ENCODE measurements at regions of chr17 and their contacts with region 1.

Region 1: DNA sequence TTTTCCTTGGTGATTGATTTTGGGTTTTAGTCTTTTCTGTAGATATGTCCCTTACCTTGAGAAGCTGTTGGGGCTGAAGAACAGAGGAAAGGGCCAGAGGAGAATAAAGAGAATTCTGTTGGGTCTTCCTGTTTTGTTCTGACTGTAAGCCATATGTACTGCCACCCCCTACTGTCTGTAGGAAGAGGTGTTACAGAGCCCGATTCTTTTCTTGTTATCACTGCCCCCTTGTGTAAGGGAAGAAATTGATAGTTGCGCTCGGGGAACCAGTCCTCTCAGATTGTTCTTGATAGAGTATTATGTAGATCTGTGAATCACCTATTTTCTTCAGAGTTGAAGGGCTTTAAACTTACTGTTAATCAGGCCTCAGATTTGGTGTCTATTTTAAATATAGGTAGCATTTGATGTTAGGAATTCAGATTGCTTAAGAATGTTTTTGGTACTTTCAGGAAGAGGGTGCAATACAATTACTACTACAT is 2.4 kb downstream of the TANC2 start:
- DNase-seq: peak in 13 of 14 experiments; percentile 13 to 87 (median 35)
- ATAC-seq: peak; percentile 56
- H3K4me3 ChIP-seq: no peak overlapping the region
- H3K4me3 Mint-ChIP-seq: peak overlapping the region; percentile 87
- H3K27ac ChIP-seq: no peak overlapping the region
- H3K27ac Mint-ChIP-seq: peak overlapping the region; percentile 68
- H3K4me1 ChIP-seq: peaks cover 18% of the 10 kb centered on the region
- H3K4me1 Mint-ChIP-seq: peaks cover 37% of the 10 kb centered on the region
- H3K27me3 ChIP-seq: no peaks in the 10 kb centered on the region
- H3K27me3 Mint-ChIP-seq: no peaks in the 10 kb centered on the region
- CTCF ChIP-seq: peak; percentile 91

Region 2: DNA sequence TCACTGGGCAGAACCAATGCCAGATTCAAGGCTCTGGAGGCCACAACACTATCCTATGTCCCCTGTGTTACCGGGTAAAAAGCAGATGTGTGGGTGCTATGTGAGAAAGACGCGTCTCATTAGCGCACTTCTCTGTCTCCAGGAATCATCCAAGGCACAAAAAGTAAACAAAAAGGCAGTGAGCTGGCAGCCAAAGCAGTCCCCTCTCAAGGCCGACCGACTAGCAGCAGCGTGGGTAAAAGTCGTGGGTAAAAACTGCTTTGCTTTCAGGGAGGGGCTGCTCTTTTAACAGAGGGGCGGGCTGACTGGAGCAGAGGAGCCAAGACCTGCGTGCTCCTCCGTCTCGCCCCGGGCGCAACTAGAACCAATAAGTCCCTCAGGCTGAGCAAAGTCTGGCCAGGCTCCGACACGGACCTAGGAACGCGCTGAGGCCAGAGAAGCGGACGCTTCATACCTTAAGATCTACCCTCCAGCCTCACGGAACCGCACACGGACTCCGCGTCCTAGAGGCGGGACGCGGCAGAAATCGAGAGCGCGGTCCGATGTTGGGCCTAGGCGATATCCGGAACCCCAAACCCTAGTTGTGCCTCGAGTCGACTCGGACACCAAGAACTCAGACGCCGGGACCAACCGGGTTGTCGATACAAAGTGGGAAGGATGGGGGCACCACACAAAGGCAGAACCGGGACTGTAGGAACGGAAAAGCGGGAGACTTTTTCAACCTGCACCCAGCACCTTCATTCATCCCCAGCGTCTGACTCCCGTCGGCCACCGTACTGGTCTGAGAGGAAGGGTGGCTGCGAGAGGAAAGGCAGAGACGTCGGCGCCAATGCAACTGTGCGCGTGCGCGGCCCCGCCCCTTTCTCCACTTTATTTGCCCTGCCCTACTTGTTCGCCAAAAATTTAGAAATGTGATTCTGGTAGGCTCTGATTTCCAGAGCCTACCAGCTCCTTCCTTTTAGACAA is 1041.0 kb before region 1 on chr17 and contains the start of gene INTS2:
- CTCF ChIA-PET with region 1: no interaction called
- POLR2A ChIA-PET with region 1: no interaction called
- intact Hi-C with region 1: loop called in 1 of 2 experiments (anchors 10 kb)
- DNase-seq: peak; percentile 91 to 98 (median 95)
- ATAC-seq: peak; percentile 84
- H3K4me3 ChIP-seq: peak within 1 kb of the TSS; percentile 62
- H3K4me3 Mint-ChIP-seq: peak within 1 kb of the TSS; percentile 94
- H3K27ac ChIP-seq: peak within 1 kb of the TSS; percentile 68 to 78
- H3K27ac Mint-ChIP-seq: peak within 1 kb of the TSS; percentile 93
- H3K4me1 ChIP-seq: peaks cover 18% of the 10 kb centered on the region
- H3K4me1 Mint-ChIP-seq: peaks cover 27% of the 10 kb centered on the region
- H3K27me3 ChIP-seq: no peaks in the 10 kb centered on the region
- H3K27me3 Mint-ChIP-seq: peaks cover 6% of the 10 kb centered on the region
- CTCF ChIP-seq: no peak
- total RNA-seq, gene INTS2: 8.5 to 8.7 TPM

Region 3: GRCh38 chr17:62478433-62478879 is 490.0 kb before region 1 on chr17 and contains the start of gene TLK2:
- CTCF ChIA-PET with region 1: no interaction called
- POLR2A ChIA-PET with region 1: no interaction called
- intact Hi-C with region 1: loop called in 1 of 2 experiments (anchors 5 kb)
- DNase-seq: peak; percentile 53 to 88 (median 78)
- ATAC-seq: peak; percentile 62
- H3K4me3 ChIP-seq: peak within 1 kb of the TSS; percentile 62
- H3K4me3 Mint-ChIP-seq: peak within 1 kb of the TSS; percentile 94
- H3K27ac ChIP-seq: peak within 1 kb of the TSS; percentile 56 to 60
- H3K27ac Mint-ChIP-seq: peak within 1 kb of the TSS; percentile 97
- H3K4me1 ChIP-seq: peaks cover 13% of the 10 kb centered on the region
- H3K4me1 Mint-ChIP-seq: peaks cover 42% of the 10 kb centered on the region
- H3K27me3 ChIP-seq: no peaks in the 10 kb centered on the region
- H3K27me3 Mint-ChIP-seq: no peaks in the 10 kb centered on the region
- CTCF ChIP-seq: no peak
- total RNA-seq, gene TLK2: 85.3 to 86.5 TPM

Region 4: DNA sequence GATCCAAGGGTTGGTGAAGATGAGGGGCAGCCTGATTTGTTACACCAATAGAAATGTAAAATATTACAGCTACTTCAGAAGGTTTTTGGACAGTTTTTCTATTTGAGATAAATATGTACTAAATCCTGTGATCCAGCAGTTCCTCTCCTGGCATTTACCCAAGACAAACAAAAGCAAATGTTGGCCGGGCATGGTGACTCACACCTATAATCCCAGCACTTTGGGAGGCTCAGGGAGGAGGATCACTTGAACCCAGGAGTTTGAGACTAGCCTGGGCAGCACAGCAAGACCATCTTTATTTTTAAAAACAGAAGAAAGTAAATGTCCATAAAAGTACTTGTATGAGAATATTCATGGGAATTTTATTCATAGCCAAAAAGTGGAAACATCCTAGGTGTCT is 405.8 kb before region 1 on chr17:
- CTCF ChIA-PET with region 1: no interaction called
- POLR2A ChIA-PET with region 1: no interaction called
- intact Hi-C with region 1: loop called in 1 of 2 experiments (anchors 5 kb)
- DNase-seq: no peak
- ATAC-seq: no peak
- H3K4me3 ChIP-seq: no peak overlapping the region
- H3K4me3 Mint-ChIP-seq: no peak overlapping the region
- H3K27ac ChIP-seq: no peak overlapping the region
- H3K27ac Mint-ChIP-seq: no peak overlapping the region
- H3K4me1 ChIP-seq: no peaks in the 10 kb centered on the region
- H3K4me1 Mint-ChIP-seq: peaks cover 17% of the 10 kb centered on the region
- H3K27me3 ChIP-seq: no peaks in the 10 kb centered on the region
- H3K27me3 Mint-ChIP-seq: no peaks in the 10 kb centered on the region
- CTCF ChIP-seq: no peak

Region 5: DNA sequence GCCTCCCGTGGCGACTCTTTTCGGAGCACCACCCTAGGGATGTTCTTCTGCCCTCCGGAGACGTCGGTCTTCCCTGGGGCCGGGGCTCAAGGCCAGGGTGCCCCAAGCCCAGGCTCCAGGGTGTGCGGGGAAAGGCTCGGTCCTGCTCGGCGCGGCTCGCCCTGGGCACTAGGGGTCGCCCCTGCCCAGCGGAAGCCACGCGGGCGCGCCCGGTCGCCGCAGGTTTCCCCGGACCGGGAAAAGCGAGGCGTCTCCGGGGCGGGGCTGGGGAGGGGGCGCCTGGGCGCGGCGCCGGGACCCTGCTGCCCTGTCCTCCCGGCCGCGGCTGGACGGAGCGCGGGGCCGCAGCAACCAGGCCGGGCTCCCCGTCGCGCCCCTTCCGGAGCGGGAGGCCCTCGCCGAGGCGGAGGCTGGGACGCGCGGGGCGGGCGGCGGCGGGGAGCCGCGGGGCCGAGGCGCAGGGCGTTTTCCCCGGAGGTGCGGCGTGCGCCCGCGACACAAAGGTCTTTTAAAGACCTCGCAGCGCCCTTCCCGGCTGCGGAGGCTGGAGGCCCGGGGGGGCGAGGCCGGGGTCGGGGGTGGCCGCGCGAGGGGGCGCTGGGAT is 264.6 kb before region 1 on chr17:
- CTCF ChIA-PET with region 1: no interaction called
- POLR2A ChIA-PET with region 1: no interaction called
- intact Hi-C with region 1: loop called (anchors 1 kb)
- DNase-seq: peak; percentile 30 to 85 (median 67)
- ATAC-seq: peak; percentile 94
- H3K4me3 ChIP-seq: peak overlapping the region; percentile 56
- H3K4me3 Mint-ChIP-seq: peak overlapping the region; percentile 34
- H3K27ac ChIP-seq: no peak overlapping the region
- H3K27ac Mint-ChIP-seq: no peak overlapping the region
- H3K4me1 ChIP-seq: peaks cover 16% of the 10 kb centered on the region
- H3K4me1 Mint-ChIP-seq: peaks cover 4% of the 10 kb centered on the region
- H3K27me3 ChIP-seq: no peaks in the 10 kb centered on the region
- H3K27me3 Mint-ChIP-seq: peaks cover 16% of the 10 kb centered on the region
- CTCF ChIP-seq: peak; percentile 78

Region 6: GRCh38 chr17:62724398-62725146 is 243.9 kb before region 1 on chr17:
- CTCF ChIA-PET with region 1: no interaction called
- POLR2A ChIA-PET with region 1: interaction called, 17 read pairs
- intact Hi-C with region 1: loop called (anchors 1 to 5 kb)
- DNase-seq: peak; percentile 43 to 89 (median 54)
- ATAC-seq: peak; percentile 96
- H3K4me3 ChIP-seq: peak overlapping the region; percentile 42
- H3K4me3 Mint-ChIP-seq: peak overlapping the region; percentile 80
- H3K27ac ChIP-seq: peak overlapping the region; percentile 8 to 87
- H3K27ac Mint-ChIP-seq: peak overlapping the region; percentile 91
- H3K4me1 ChIP-seq: peaks cover 26% of the 10 kb centered on the region
- H3K4me1 Mint-ChIP-seq: peaks cover 28% of the 10 kb centered on the region
- H3K27me3 ChIP-seq: no peaks in the 10 kb centered on the region
- H3K27me3 Mint-ChIP-seq: no peaks in the 10 kb centered on the region
- CTCF ChIP-seq: no peak

Region 7: GRCh38 chr17:62923258-62924150 is 45.0 kb before region 1 on chr17:
- CTCF ChIA-PET with region 1: no interaction called
- POLR2A ChIA-PET with region 1: no interaction called
- intact Hi-C with region 1: no loop called
- DNase-seq: no peak
- ATAC-seq: no peak
- H3K4me3 ChIP-seq: no peak overlapping the region
- H3K4me3 Mint-ChIP-seq: no peak overlapping the region
- H3K27ac ChIP-seq: no peak overlapping the region
- H3K27ac Mint-ChIP-seq: no peak overlapping the region
- H3K4me1 ChIP-seq: no peaks in the 10 kb centered on the region
- H3K4me1 Mint-ChIP-seq: no peaks in the 10 kb centered on the region
- H3K27me3 ChIP-seq: peaks cover 3 to 9% of the 10 kb centered on the region in 2 experiments
- H3K27me3 Mint-ChIP-seq: peaks cover 11% of the 10 kb centered on the region
- CTCF ChIP-seq: no peak

Region 8: GRCh38 chr17:62987137-62987536 is 18.7 kb after region 1 on chr17:
- CTCF ChIA-PET with region 1: no interaction called
- POLR2A ChIA-PET with region 1: no interaction called
- intact Hi-C with region 1: no loop called
- DNase-seq: no peak
- ATAC-seq: no peak
- H3K4me3 ChIP-seq: no peak overlapping the region
- H3K4me3 Mint-ChIP-seq: no peak overlapping the region
- H3K27ac ChIP-seq: no peak overlapping the region
- H3K27ac Mint-ChIP-seq: no peak overlapping the region
- H3K4me1 ChIP-seq: no peaks in the 10 kb centered on the region
- H3K4me1 Mint-ChIP-seq: peaks cover 7% of the 10 kb centered on the region
- H3K27me3 ChIP-seq: no peaks in the 10 kb centered on the region
- H3K27me3 Mint-ChIP-seq: no peaks in the 10 kb centered on the region
- CTCF ChIP-seq: no peak

Region 9: GRCh38 chr17:63549946-63550807 is 581.7 kb after region 1 on chr17 and contains the start of gene DCAF7:
- CTCF ChIA-PET with region 1: no interaction called
- POLR2A ChIA-PET with region 1: no interaction called
- intact Hi-C with region 1: loop called in 1 of 2 experiments (anchors 10 kb)
- DNase-seq: peak; percentile 97 to 100 (median 99)
- ATAC-seq: peak; percentile 95
- H3K4me3 ChIP-seq: peak within 1 kb of the TSS; percentile 89
- H3K4me3 Mint-ChIP-seq: peak within 1 kb of the TSS; percentile 98
- H3K27ac ChIP-seq: peak within 1 kb of the TSS; percentile 90 to 91
- H3K27ac Mint-ChIP-seq: peak within 1 kb of the TSS; percentile 88
- H3K4me1 ChIP-seq: peaks cover 38% of the 10 kb centered on the region
- H3K4me1 Mint-ChIP-seq: peaks cover 52% of the 10 kb centered on the region
- H3K27me3 ChIP-seq: no peaks in the 10 kb centered on the region
- H3K27me3 Mint-ChIP-seq: no peaks in the 10 kb centered on the region
- CTCF ChIP-seq: no peak
- total RNA-seq, gene DCAF7: 11.3 to 11.9 TPM

Region 10: GRCh38 chr17:63696381-63696961 is 728.0 kb after region 1 on chr17:
- CTCF ChIA-PET with region 1: no interaction called
- POLR2A ChIA-PET with region 1: no interaction called
- intact Hi-C with region 1: no loop called
- DNase-seq: peak in 12 of 14 experiments; percentile 36 to 78 (median 43)
- ATAC-seq: peak; percentile 7
- H3K4me3 ChIP-seq: peak overlapping the region; percentile 98
- H3K4me3 Mint-ChIP-seq: peak overlapping the region; percentile 100
- H3K27ac ChIP-seq: peak overlapping the region; percentile 73 to 91
- H3K27ac Mint-ChIP-seq: peak overlapping the region; percentile 100
- H3K4me1 ChIP-seq: peaks cover 71% of the 10 kb centered on the region
- H3K4me1 Mint-ChIP-seq: peaks cover 65% of the 10 kb centered on the region
- H3K27me3 ChIP-seq: no peaks in the 10 kb centered on the region
- H3K27me3 Mint-ChIP-seq: peaks cover 5% of the 10 kb centered on the region
- CTCF ChIP-seq: peak; percentile 32